MCF 10A (cell line): ENCODE measurements at regions of chr11 and their contacts with region 1.

Region 1: DNA sequence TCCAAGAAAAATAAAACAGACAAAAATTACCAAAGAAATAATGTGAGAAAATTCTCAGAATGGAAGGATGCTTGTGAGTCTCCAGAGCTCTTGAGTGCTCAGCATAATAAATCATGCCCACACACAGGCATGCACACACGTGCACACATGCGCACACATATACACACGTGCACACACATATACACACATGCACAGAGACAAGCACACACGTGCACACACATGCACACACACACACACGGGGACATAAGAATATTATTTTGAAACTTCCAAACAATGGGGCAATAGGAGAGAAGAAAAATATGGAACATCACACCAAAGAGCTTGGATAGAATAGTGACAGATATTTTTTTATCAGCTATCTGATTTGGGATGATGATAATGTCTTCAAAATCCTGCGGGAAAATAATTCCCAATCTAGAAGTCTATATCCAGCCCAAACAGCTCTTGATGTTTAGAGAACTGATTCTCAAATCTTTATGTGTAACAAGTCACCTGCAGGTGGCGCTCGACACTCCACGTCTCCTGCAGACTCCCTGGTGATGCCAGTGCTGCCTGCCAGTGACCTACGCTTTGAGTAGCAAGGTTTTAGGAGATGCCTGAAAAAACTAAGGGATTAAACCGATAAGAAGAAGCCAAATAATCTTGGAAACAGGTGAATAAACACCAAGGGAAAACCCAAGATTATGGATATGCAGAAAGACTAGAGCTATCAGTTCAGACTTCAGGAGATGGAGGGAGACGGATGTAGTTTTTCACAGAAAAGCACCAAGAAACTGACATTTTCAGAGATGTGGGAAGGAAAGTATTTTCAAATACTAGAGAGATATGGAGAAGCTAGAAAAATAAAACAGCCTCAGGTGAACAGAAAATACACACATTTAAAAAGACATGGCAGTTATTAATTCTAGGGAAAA is 743.6 kb downstream of the ETS1 start:
- DNase-seq: peak; percentile 80
- H3K4me3 Mint-ChIP-seq: no peak overlapping the region
- H3K27ac Mint-ChIP-seq: no peak overlapping the region
- H3K4me1 Mint-ChIP-seq: no peaks in the 10 kb centered on the region
- H3K27me3 Mint-ChIP-seq: no peaks in the 10 kb centered on the region
- CTCF ChIP-seq: peak; percentile 70

Region 2: DNA sequence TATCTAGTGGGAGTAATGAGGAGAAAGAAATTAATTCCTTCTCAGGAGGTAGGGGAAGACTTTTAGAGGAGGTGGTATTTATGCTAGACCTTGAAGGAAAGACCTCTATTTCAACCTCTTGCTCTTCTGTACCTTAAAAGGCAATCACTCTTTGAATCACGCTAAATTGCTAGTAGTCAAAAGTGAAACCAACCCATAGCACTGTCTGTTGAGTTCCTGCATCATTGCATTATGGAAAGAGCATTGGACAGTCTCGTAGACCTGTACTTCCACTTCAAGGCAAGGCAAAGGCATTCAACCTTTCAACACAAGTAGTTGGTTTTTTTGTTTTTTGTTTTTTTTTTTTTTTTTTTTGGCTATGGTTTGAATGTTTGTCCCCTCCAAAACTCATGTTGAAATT is 26.8 kb before region 1 on chr11:
- CTCF ChIA-PET with region 1: interaction called, 11 read pairs
- POLR2A ChIA-PET with region 1: no interaction called
- intact Hi-C with region 1: no loop called
- DNase-seq: peak; percentile 6
- H3K4me3 Mint-ChIP-seq: no peak overlapping the region
- H3K27ac Mint-ChIP-seq: no peak overlapping the region
- H3K4me1 Mint-ChIP-seq: no peaks in the 10 kb centered on the region
- H3K27me3 Mint-ChIP-seq: no peaks in the 10 kb centered on the region
- CTCF ChIP-seq: no peak

Region 3: DNA sequence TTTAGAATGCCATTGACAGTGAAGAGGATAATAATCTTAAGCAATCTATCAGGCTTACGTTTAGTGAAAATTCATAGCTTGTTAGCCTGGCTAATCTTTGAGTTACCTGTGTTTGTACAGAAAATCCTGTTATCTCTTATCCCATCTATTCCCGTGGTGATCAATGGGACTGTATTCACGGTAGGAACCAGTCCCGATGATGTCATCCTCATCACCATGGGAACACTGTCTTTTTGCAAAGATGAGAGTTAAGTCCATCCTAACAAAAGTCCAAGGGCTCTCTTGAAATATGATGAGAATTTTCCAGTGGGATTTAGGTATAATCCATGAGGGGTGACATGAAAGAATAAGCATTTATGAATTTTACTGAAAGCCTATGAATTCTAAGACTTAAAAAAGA is 18.6 kb before region 1 on chr11:
- CTCF ChIA-PET with region 1: interaction called, 14 read pairs
- POLR2A ChIA-PET with region 1: no interaction called
- intact Hi-C with region 1: no loop called
- DNase-seq: no peak
- H3K4me3 Mint-ChIP-seq: no peak overlapping the region
- H3K27ac Mint-ChIP-seq: no peak overlapping the region
- H3K4me1 Mint-ChIP-seq: no peaks in the 10 kb centered on the region
- H3K27me3 Mint-ChIP-seq: peaks cover 18% of the 10 kb centered on the region
- CTCF ChIP-seq: no peak

Region 4: GRCh38 chr11:127859941-127860354 is 16.2 kb after region 1 on chr11:
- CTCF ChIA-PET with region 1: interaction called, 10 read pairs
- POLR2A ChIA-PET with region 1: no interaction called
- intact Hi-C with region 1: no loop called
- DNase-seq: no peak
- H3K4me3 Mint-ChIP-seq: no peak overlapping the region
- H3K27ac Mint-ChIP-seq: no peak overlapping the region
- H3K4me1 Mint-ChIP-seq: peaks cover 15% of the 10 kb centered on the region
- H3K27me3 Mint-ChIP-seq: no peaks in the 10 kb centered on the region
- CTCF ChIP-seq: no peak

Region 5: DNA sequence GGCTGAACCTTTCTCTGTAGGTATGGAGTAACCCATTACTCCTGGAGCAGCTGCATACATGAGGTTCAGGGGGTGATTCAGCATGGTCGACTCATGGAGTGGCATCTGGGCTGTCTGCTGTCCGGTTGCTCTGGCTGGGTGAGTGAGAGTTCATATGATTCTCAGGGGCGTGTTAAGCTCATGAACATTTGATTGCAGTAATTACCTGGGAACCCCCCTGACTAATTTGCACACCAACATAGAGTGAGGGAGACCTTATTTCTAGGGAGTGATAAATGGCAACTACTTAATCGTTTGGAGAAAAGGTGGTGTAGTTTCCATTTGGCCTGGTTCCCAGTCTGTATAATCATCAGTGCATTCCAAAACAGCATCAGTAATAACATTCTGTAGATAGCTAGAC is 81.7 kb after region 1 on chr11:
- CTCF ChIA-PET with region 1: no interaction called
- POLR2A ChIA-PET with region 1: no interaction called
- intact Hi-C with region 1: no loop called
- DNase-seq: peak; percentile 14
- H3K4me3 Mint-ChIP-seq: no peak overlapping the region
- H3K27ac Mint-ChIP-seq: no peak overlapping the region
- H3K4me1 Mint-ChIP-seq: peaks cover 9% of the 10 kb centered on the region
- H3K27me3 Mint-ChIP-seq: no peaks in the 10 kb centered on the region
- CTCF ChIP-seq: no peak

Region 6: DNA sequence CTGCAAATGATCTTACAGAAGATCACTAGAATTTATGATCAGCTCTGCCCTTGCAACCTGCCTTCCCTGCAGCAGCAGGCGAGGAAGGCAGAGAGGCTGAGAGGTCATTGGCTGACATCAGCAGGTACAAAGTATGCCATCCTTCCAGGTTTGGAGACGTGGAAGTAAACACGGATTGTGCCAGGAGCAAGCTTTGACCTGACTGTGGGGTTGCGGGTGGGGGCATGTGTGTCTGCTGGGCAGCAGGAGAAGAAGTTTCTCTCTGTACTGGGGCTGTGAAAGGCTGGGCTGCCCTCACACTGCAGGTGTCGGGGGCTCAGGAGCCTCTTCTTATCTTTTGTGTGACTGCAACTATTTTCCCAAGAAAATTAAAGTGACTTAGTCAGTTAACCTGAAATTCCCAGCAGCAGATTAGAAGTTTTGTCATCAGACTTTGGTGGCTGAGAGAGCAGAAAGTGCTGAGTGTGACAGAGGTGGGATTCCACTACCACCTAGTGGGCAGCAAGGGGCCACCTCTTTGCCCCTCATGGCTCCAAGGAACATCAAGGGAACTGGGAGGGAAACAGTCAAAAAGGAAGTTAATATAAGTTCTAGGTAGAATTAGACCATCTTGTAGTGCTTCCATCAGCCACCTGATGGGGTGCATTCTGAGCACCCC is 177.7 kb after region 1 on chr11:
- CTCF ChIA-PET with region 1: interaction called, 18 read pairs
- POLR2A ChIA-PET with region 1: interaction called, 3 read pairs
- intact Hi-C with region 1: loop called (anchors 1 kb)
- DNase-seq: peak; percentile 28
- H3K4me3 Mint-ChIP-seq: no peak overlapping the region
- H3K27ac Mint-ChIP-seq: no peak overlapping the region
- H3K4me1 Mint-ChIP-seq: peaks cover 8% of the 10 kb centered on the region
- H3K27me3 Mint-ChIP-seq: no peaks in the 10 kb centered on the region
- CTCF ChIP-seq: peak; percentile 39

Region 7: DNA sequence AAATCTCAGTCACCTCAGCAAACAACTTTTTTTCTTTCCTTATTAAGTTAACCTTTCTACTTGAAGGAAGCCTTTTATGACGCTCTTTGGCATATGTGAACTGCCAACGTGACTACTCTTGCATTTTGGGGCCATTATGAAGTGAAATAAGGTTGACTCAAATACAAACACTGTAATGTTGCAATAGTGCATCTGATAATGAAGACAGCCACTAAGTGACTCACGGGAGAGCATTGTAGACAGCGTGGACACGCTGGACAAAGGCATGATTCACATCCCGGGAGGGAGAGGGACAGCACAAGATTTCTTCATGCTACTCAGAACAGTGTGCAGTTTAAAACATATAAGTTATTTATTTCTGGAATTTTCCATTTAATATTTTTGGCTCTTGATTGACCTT is 182.9 kb after region 1 on chr11:
- CTCF ChIA-PET with region 1: interaction called, 18 read pairs
- POLR2A ChIA-PET with region 1: interaction called, 3 read pairs
- intact Hi-C with region 1: loop called (anchors 1 kb)
- DNase-seq: peak; percentile 98
- H3K4me3 Mint-ChIP-seq: peak overlapping the region; percentile 30
- H3K27ac Mint-ChIP-seq: peak overlapping the region; percentile 28
- H3K4me1 Mint-ChIP-seq: peaks cover 42% of the 10 kb centered on the region
- H3K27me3 Mint-ChIP-seq: no peaks in the 10 kb centered on the region
- CTCF ChIP-seq: no peak